GM12878 (cell line): ENCODE measurements at regions of chr1 and their contacts with region 1.

Region 1: DNA sequence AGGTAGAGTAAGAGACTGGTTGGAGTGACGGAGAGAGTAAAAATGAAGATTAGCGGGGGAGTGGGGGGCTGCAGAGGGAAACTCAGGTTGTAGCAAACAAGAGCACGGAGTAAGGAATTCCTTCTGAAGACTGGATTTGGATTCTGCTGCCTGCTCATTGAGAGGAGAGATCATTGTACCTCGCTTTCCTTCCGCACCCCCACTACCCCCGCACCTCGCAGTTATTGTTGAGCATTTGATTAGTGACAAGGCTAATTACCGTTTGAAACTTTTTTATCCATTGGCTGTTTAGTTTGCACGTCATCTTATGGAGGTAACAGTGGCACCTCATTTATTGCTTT is 463 bp downstream of the PRPF3 start:
- DNase-seq: no peak
- ATAC-seq: peak; percentile 3
- H3K4me3 ChIP-seq: peak overlapping the region; percentile 85
- H3K27ac ChIP-seq: peak overlapping the region; percentile 87
- H3K4me1 ChIP-seq: no peaks in the 10 kb centered on the region
- H3K27me3 ChIP-seq: no peaks in the 10 kb centered on the region
- CTCF ChIP-seq: no peak
- EP300 ChIP-seq: no peak
- POLR2A ChIP-seq: no peak
- RAD21 ChIP-seq: no peak

Region 2: DNA sequence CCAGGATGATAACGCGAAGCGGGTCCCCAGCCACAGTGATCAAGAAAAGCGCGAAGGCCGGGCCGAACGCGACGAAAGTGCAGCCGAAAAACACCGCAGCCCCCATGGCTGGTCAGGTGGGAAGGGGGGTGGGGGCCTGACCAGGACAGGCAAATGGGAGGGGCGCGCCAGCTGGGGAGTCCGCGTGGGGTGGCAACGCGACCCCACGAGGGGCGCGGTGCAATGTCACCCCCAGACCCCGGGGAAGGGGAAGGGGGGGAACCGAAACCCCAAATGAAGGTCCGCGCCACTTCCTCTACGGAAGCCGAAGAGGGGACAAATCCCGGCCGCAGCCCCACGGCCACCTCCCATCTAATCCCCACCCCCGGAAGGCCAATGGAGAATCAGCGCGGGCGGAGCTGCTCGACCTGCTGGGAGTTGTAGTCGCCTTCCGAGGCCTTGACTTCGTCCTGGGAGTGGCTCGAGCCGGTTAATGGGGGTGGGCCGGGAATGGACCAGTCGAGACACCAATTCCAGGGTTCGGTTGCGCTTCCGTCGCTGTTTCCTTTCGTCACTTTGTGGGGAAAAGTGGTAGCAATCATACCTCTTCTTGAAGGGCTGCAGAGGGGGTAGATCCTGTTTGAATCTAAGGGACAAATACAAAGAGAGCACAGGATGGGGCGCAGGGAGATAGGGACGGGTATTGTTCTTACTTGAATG is 52.9 kb before region 1 on chr1 and contains the start of gene APH1A:
- CTCF ChIA-PET with region 1: no interaction called
- POLR2A ChIA-PET with region 1: no interaction called
- RAD21 ChIA-PET with region 1: no interaction called
- SMC1A ChIA-PET with region 1: interaction called, 4 read pairs
- in situ Hi-C with region 1: no loop called
- intact Hi-C with region 1: loop called (anchors 5 kb)
- DNase-seq: peak; percentile 78
- ATAC-seq: peak; percentile 99
- H3K4me3 ChIP-seq: peak within 1 kb of the TSS; percentile 97
- H3K27ac ChIP-seq: peak within 1 kb of the TSS; percentile 90
- H3K4me1 ChIP-seq: peaks cover 12% of the 10 kb centered on the region
- H3K27me3 ChIP-seq: no peaks in the 10 kb centered on the region
- CTCF ChIP-seq: no peak
- EP300 ChIP-seq: no peak
- POLR2A ChIP-seq: peak; percentile 84
- RAD21 ChIP-seq: no peak
- polyA plus RNA-seq, gene APH1A: 6.7 to 13.5 TPM

Region 3: DNA sequence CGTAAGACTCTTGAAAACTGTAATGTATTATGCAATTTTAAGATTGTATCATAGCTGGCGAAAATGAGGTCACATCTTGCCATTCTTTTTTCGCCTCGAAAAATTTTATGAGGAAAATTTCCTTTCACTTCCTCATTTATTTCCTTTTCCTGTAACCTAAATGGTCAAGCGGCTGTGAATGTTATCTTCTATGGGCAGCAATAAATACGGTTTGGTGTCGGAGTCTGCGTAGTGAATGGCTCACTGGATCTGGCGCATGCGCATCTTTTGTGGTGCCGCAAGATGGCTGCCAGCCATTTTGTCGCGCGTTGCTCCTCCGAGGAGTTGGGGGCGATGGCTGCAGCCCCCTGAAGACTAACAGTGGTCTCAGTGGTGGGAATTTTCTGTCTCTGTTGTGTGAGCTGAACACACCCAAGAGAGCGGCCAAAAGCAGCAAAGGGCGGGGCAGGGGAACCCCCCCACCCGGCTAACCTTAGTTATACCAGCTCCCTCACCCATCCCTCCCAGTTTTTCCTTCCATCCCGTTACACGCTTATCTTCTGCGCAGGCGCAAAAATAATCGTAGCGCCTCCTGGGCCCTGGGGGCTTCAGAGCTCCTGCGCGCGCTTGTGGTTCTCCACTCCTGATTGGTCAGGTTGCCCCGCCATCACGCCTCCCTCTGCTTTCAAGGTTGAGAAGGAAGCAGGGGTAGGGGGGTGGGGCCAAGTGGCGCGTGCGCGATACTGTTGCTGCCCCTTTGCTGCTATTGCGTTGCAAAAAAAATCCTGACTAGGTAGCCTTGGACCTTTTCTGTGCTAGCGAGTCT is 41.8 kb after region 1 on chr1 and contains the start of gene RPRD2:
- CTCF ChIA-PET with region 1: interaction called, 3 read pairs
- POLR2A ChIA-PET with region 1: interaction called, 5 read pairs
- RAD21 ChIA-PET with region 1: no interaction called
- SMC1A ChIA-PET with region 1: no interaction called
- in situ Hi-C with region 1: no loop called
- intact Hi-C with region 1: loop called (anchors 5 kb)
- DNase-seq: peak; percentile 97
- ATAC-seq: peak; percentile 95
- H3K4me3 ChIP-seq: peak within 1 kb of the TSS; percentile 69
- H3K27ac ChIP-seq: peak within 1 kb of the TSS; percentile 94
- H3K4me1 ChIP-seq: peaks cover 5% of the 10 kb centered on the region
- H3K27me3 ChIP-seq: no peaks in the 10 kb centered on the region
- CTCF ChIP-seq: no peak
- EP300 ChIP-seq: no peak
- POLR2A ChIP-seq: peak; percentile 92
- RAD21 ChIP-seq: no peak
- polyA plus RNA-seq, gene RPRD2: 1.9 to 4.0 TPM